ENCODE measurements at regions of chr9 and their contacts with region 1.

Region 1: GRCh38 chr9:113807173-113808061 is 68.7 kb upstream of the ZNF618 start:
- DNase-seq: peak; percentile 91
- H3K4me3 ChIP-seq: peak overlapping the region in 2 of 4 donors; percentile 23 to 41
- H3K27ac ChIP-seq: no peak overlapping the region
- H3K4me1 ChIP-seq: peaks cover 4 to 9% (median 8%) of the 10 kb centered on the region in 4 donors
- H3K27me3 ChIP-seq: peaks cover 0 to 8% (median 0%) of the 10 kb centered on the region in 4 donors
- CTCF ChIP-seq: peak; percentile 72 to 91 (median 77)
- EP300 ChIP-seq: no peak
- POLR2A ChIP-seq: no peak

Region 2: DNA sequence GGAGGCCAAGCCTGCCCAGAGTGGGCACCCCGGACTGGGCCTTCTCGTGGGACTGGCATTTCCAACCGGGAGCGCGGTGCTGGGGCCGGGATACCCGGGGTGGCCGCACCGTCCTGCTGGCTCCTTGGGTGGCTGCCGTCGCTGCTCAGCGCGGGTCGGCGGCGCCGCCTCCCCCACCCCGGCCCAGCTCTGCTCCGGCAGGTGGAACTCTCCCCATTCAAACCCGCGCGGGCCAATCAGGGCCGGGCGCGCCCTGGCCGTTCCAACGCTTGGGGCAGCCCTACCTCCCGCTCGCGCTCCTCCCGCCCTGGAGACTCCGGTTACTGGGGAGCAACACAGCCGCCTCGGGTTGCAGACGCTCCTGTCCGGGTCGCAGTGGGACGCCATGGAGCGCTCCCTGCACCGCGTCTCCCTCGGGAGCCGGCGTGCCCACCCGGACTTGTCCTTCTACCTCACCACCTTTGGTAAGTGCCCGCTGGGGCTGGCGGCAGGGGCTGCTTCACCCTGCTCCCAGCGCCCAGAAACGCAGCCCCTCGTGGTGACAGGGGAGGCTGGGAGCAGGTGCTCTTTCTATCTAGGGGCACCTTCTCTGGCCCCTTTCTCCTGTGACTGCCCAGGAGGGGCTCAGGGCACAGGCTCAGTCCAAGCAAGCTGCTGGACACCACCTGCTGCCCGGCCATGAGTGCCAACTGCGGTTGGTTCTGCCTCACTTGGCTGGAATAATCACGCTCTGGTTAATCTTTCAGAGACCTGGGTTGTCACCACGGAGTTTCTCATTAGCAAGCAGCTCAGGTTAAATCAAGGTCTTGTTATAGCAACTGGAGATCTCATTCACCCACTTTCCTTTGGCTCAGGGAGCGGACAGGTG is 343.8 kb before region 1 on chr9 and contains the start of gene RGS3:
- intact Hi-C with region 1: no loop called
- DNase-seq: no peak
- H3K4me3 ChIP-seq: peak within 1 kb of the TSS; percentile 58 to 70 (median 66)
- H3K27ac ChIP-seq: peak within 1 kb of the TSS; percentile 81 to 85 (median 84)
- H3K4me1 ChIP-seq: peaks cover 5 to 43% (median 35%) of the 10 kb centered on the region in 4 donors
- H3K27me3 ChIP-seq: peaks cover 0 to 3% (median 0%) of the 10 kb centered on the region in 4 donors
- CTCF ChIP-seq: peak in 2 of 3 experiments; percentile 16 to 37
- EP300 ChIP-seq: no peak
- POLR2A ChIP-seq: no peak
- total RNA-seq, gene RGS3: 37.3 to 121 (median 68.5) TPM

Region 3: DNA sequence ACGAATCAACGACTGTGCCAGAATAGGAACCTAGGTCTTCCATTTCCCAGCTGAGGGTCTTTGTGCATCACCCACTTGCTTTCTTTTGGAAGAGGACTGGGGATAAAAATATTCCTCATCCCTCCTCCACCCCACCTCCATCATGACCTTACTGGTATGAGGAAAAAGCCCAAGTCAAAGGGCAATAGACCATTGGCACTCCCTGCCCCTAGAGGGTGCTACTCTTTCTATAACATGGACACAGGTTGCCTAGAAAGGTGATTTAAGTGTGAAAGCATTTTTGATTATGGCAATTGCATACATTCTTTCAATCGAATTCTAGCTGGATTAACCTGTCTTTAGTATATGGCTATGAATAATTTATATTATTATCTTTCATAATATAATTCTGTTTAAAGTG is 45.9 kb after region 1 on chr9:
- intact Hi-C with region 1: no loop called
- DNase-seq: peak; percentile 34
- H3K4me3 ChIP-seq: no peak overlapping the region
- H3K27ac ChIP-seq: no peak overlapping the region
- H3K4me1 ChIP-seq: no peaks in the 10 kb centered on the region
- H3K27me3 ChIP-seq: no peaks in the 10 kb centered on the region
- CTCF ChIP-seq: peak in 1 of 3 experiments; percentile 7
- EP300 ChIP-seq: no peak
- POLR2A ChIP-seq: no peak

Region 4: GRCh38 chr9:113876151-113876992 is 69.0 kb after region 1 on chr9 and contains the start of gene ZNF618:
- intact Hi-C with region 1: loop called (anchors 2 kb)
- DNase-seq: no peak
- H3K4me3 ChIP-seq: peak within 1 kb of the TSS; percentile 83 to 96 (median 90)
- H3K27ac ChIP-seq: peak within 1 kb of the TSS; percentile 65 to 78 (median 68)
- H3K4me1 ChIP-seq: peaks cover 4 to 18% (median 11%) of the 10 kb centered on the region in 4 donors
- H3K27me3 ChIP-seq: no peaks in the 10 kb centered on the region
- CTCF ChIP-seq: peak; percentile 26 to 50 (median 49)
- EP300 ChIP-seq: no peak
- POLR2A ChIP-seq: no peak
- total RNA-seq, gene ZNF618: 1.2 to 4.5 (median 2.6) TPM

Region 5: GRCh38 chr9:113963017-113963620 is 155.7 kb after region 1 on chr9:
- intact Hi-C with region 1: no loop called
- DNase-seq: no peak
- H3K4me3 ChIP-seq: no peak overlapping the region
- H3K27ac ChIP-seq: no peak overlapping the region
- H3K4me1 ChIP-seq: peaks cover 0 to 13% (median 2%) of the 10 kb centered on the region in 4 donors
- H3K27me3 ChIP-seq: no peaks in the 10 kb centered on the region
- CTCF ChIP-seq: peak; percentile 26 to 46 (median 42)
- EP300 ChIP-seq: no peak
- POLR2A ChIP-seq: no peak

Region 6: DNA sequence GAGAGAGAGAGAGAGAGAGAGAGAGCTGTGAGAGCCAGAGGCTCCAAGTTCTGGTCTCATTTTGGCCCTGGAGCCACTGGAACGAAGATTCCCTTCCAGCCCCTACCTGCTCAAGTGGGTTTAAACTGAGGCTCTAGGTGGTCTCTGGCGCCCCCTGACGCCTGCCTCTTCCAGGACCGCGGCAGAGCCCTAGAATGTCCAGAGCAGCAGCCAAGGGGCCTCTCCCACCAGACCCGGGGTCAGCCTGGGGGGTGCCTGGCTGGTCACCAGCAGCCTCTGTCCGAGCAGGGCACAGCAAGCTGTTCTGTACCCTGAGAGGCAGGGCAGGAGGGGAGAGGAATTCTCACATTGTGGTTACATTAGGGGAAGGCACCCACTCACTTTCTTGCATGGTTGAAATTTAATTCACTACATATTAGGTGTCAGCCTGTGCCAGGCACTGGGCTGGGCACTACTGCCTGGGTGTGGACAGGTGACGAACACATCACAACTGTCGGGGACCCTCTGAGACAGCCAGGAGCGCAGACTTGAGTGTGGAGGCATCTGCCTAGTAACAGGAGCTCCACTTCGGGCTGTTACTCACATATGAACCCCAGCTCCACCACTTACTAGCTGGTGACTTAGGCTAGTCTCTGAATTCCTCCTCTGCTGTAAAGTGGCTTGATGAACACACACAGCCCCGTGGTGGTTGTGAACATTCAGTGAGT is 226.1 kb after region 1 on chr9:
- intact Hi-C with region 1: loop called (anchors 2 kb)
- DNase-seq: peak; percentile 89
- H3K4me3 ChIP-seq: no peak overlapping the region
- H3K27ac ChIP-seq: no peak overlapping the region
- H3K4me1 ChIP-seq: no peaks in the 10 kb centered on the region
- H3K27me3 ChIP-seq: no peaks in the 10 kb centered on the region
- CTCF ChIP-seq: peak; percentile 33 to 50 (median 42)
- EP300 ChIP-seq: no peak
- POLR2A ChIP-seq: no peak